ENCODE measurements at regions of chr1 and their contacts with region 1.

Region 1: DNA sequence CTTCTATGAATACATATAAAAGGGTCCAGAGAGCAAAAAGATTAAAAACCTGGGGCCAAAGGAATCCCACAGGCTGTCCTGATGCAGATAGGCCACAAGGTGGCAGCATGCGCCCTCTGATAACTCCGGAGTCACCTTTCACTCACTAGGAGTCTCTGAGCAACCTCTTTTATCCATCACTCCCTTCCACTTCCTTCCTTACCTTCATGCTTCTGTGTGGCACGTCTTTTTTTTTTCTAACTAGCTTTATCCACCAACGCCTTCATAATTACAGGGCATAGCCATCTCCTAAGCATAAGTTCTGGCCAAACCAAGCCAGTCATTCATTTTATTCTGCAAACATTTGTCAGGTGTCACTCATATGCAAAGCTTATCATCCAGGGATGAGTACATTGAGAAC is 3.9 kb upstream of the PGLYRP4 start:
- DNase-seq: peak; percentile 30
- H3K4me3 ChIP-seq: no peak overlapping the region
- H3K27ac ChIP-seq: no peak overlapping the region
- H3K27me3 ChIP-seq: peaks cover 6% of the 10 kb centered on the region
- CTCF ChIP-seq: peak; percentile 93

Region 2: GRCh38 chr1:153365303-153366095 is 13.0 kb after region 1 on chr1:
- CTCF ChIA-PET with region 1: interaction called, 27 read pairs
- POLR2A ChIA-PET with region 1: no interaction called
- DNase-seq: no peak
- H3K4me3 ChIP-seq: no peak overlapping the region
- H3K27ac ChIP-seq: no peak overlapping the region
- H3K27me3 ChIP-seq: peaks cover 8% of the 10 kb centered on the region
- CTCF ChIP-seq: no peak

Region 3: GRCh38 chr1:153386500-153386901 is 34.0 kb after region 1 on chr1:
- CTCF ChIA-PET with region 1: no interaction called
- POLR2A ChIA-PET with region 1: no interaction called
- DNase-seq: no peak
- H3K4me3 ChIP-seq: no peak overlapping the region
- H3K27ac ChIP-seq: no peak overlapping the region
- H3K27me3 ChIP-seq: peaks cover 8% of the 10 kb centered on the region
- CTCF ChIP-seq: no peak

Region 4: GRCh38 chr1:153465811-153466636 is 113.5 kb after region 1 on chr1:
- CTCF ChIA-PET with region 1: interaction called, 10 read pairs
- POLR2A ChIA-PET with region 1: no interaction called
- DNase-seq: no peak
- H3K4me3 ChIP-seq: no peak overlapping the region
- H3K27ac ChIP-seq: no peak overlapping the region
- H3K27me3 ChIP-seq: peaks cover 9% of the 10 kb centered on the region
- CTCF ChIP-seq: peak; percentile 72

Region 5: DNA sequence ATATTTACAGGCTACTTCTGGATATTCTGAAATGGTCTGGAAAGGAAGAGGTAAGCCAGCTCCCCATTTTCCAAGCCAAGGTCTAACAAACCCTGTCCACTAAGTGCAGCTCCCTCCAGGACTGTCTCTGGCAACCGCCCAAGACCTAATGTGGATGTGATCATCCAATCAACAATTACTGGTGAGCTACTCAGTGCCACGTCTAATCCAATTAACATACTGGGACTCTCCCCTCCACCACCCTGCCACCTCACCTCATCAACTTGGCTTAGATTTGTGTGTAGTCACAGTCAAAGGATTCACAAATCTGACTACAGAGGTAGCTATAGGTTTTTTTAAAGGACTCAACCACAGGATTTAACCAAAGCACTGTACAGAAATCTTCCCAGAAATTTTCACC is 133.3 kb after region 1 on chr1:
- CTCF ChIA-PET with region 1: interaction called, 354 read pairs
- POLR2A ChIA-PET with region 1: no interaction called
- DNase-seq: no peak
- H3K4me3 ChIP-seq: no peak overlapping the region
- H3K27ac ChIP-seq: no peak overlapping the region
- H3K27me3 ChIP-seq: peaks cover 34% of the 10 kb centered on the region
- CTCF ChIP-seq: no peak

Region 6: DNA sequence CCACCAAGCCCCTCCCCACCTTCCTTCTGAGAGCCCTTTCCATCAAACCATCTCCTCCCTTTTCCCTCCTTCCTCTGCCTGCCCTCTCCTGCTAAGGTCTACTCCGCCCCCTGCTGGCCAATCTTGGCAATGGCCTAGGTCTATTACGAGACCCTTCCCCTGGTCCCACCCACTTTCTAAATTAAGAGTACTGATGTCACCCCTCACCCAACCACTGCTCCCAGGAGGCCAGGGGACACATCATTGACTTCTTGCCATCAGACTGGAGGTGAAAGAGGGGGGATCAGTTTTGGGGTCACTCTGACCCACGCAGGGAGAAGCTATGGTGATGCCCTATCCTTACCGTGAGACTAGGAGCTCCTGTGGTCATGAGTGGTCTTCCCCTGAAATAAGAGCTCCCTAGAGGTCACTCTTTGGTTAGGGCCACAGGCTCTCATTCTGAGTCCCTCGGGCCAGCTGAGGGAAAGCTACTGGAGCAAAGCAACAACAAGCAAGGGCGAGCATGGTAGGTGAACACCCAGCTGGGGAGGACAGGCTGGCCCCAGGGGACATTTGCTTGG is 142.5 kb after region 1 on chr1:
- CTCF ChIA-PET with region 1: interaction called, 354 read pairs
- POLR2A ChIA-PET with region 1: no interaction called
- DNase-seq: peak; percentile 29
- H3K4me3 ChIP-seq: no peak overlapping the region
- H3K27ac ChIP-seq: no peak overlapping the region
- H3K27me3 ChIP-seq: peaks cover 10% of the 10 kb centered on the region
- CTCF ChIP-seq: peak; percentile 98

Region 7: GRCh38 chr1:153617675-153618074 is 265.2 kb after region 1 on chr1:
- CTCF ChIA-PET with region 1: interaction called, 13 read pairs
- POLR2A ChIA-PET with region 1: no interaction called
- DNase-seq: no peak
- H3K4me3 ChIP-seq: no peak overlapping the region
- H3K27ac ChIP-seq: no peak overlapping the region
- H3K27me3 ChIP-seq: no peaks in the 10 kb centered on the region
- CTCF ChIP-seq: peak; percentile 61